ENCODE measurements at regions of chr16 and their contacts with region 1.

Region 1: GRCh38 chr16:87636072-87636684 is 33.9 kb downstream of the JPH3 start:
- DNase-seq: peak; percentile 63 to 90 (median 83)
- ATAC-seq: peak; percentile 85
- H3K4me3 ChIP-seq: peak overlapping the region; percentile 54 to 64
- H3K4me3 Mint-ChIP-seq: peak overlapping the region; percentile 87
- H3K27ac ChIP-seq: peak overlapping the region; percentile 47 to 49
- H3K27ac Mint-ChIP-seq: peak overlapping the region; percentile 93
- H3K4me1 ChIP-seq: peaks cover 17% of the 10 kb centered on the region
- H3K4me1 Mint-ChIP-seq: peaks cover 15% of the 10 kb centered on the region
- H3K27me3 ChIP-seq: peaks cover 0 to 2% of the 10 kb centered on the region in 2 experiments
- H3K27me3 Mint-ChIP-seq: no peaks in the 10 kb centered on the region
- CTCF ChIP-seq: peak; percentile 65

Region 2: GRCh38 chr16:87316923-87317749 is 319.0 kb before region 1 on chr16 and contains the start of gene C16orf95:
- CTCF ChIA-PET with region 1: interaction called, 28 read pairs
- POLR2A ChIA-PET with region 1: no interaction called
- intact Hi-C with region 1: loop called (anchors 1 to 2 kb)
- DNase-seq: peak; percentile 93 to 99 (median 97)
- ATAC-seq: peak; percentile 89
- H3K4me3 ChIP-seq: peak within 1 kb of the TSS; percentile 92 to 99
- H3K4me3 Mint-ChIP-seq: peak within 1 kb of the TSS; percentile 94
- H3K27ac ChIP-seq: peak within 1 kb of the TSS; percentile 76 to 81
- H3K27ac Mint-ChIP-seq: peak within 1 kb of the TSS; percentile 95
- H3K4me1 ChIP-seq: peaks cover 8% of the 10 kb centered on the region
- H3K4me1 Mint-ChIP-seq: peaks cover 14% of the 10 kb centered on the region
- H3K27me3 ChIP-seq: no peaks in the 10 kb centered on the region
- H3K27me3 Mint-ChIP-seq: no peaks in the 10 kb centered on the region
- CTCF ChIP-seq: peak; percentile 42
- total RNA-seq, gene C16orf95: 0.76 to 1.2 TPM

Region 3: GRCh38 chr16:87416826-87417527 is 219.2 kb before region 1 on chr16:
- CTCF ChIA-PET with region 1: interaction called, 39 read pairs
- POLR2A ChIA-PET with region 1: interaction called, 5 read pairs
- intact Hi-C with region 1: loop called in 1 of 2 experiments (anchors 1 kb)
- DNase-seq: peak in 5 of 9 experiments; percentile 35 to 54 (median 42)
- ATAC-seq: no peak
- H3K4me3 ChIP-seq: no peak overlapping the region
- H3K4me3 Mint-ChIP-seq: no peak overlapping the region
- H3K27ac ChIP-seq: no peak overlapping the region
- H3K27ac Mint-ChIP-seq: no peak overlapping the region
- H3K4me1 ChIP-seq: no peaks in the 10 kb centered on the region
- H3K4me1 Mint-ChIP-seq: no peaks in the 10 kb centered on the region
- H3K27me3 ChIP-seq: no peaks in the 10 kb centered on the region
- H3K27me3 Mint-ChIP-seq: no peaks in the 10 kb centered on the region
- CTCF ChIP-seq: peak; percentile 60

Region 4: DNA sequence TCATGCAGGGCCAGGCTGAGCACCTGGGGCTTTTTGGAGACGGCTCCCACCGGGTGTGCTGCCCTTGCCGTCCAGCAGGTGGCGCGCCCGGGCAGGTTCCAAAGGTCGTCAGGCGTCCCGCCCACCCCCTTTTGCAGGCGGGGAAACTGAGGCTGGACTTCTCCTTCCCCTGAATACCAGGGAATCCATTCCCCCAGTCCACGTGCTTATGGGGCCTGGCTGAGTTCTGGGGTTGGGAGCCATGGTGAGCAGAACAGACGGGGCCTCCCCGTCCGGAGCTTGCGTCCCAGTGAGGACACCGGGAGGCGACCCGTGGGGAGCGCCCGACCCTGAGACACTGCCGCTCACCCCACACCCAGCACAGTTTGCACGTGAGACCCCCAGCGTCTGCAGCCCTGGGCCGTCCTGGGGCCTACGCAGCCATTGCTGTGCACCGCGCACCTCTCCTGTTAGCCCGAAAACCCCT is 85.6 kb before region 1 on chr16:
- CTCF ChIA-PET with region 1: interaction called, 36 read pairs
- POLR2A ChIA-PET with region 1: no interaction called
- intact Hi-C with region 1: loop called in 1 of 2 experiments (anchors 1 kb)
- DNase-seq: peak; percentile 22 to 79 (median 60)
- ATAC-seq: peak; percentile 56
- H3K4me3 ChIP-seq: no peak overlapping the region
- H3K4me3 Mint-ChIP-seq: no peak overlapping the region
- H3K27ac ChIP-seq: no peak overlapping the region
- H3K27ac Mint-ChIP-seq: no peak overlapping the region
- H3K4me1 ChIP-seq: no peaks in the 10 kb centered on the region
- H3K4me1 Mint-ChIP-seq: peaks cover 5% of the 10 kb centered on the region
- H3K27me3 ChIP-seq: no peaks in the 10 kb centered on the region
- H3K27me3 Mint-ChIP-seq: peaks cover 23% of the 10 kb centered on the region
- CTCF ChIP-seq: peak; percentile 91

Region 5: GRCh38 chr16:87587636-87588035 is 48.5 kb before region 1 on chr16:
- CTCF ChIA-PET with region 1: interaction called, 54 read pairs
- POLR2A ChIA-PET with region 1: no interaction called
- intact Hi-C with region 1: loop called in 1 of 2 experiments (anchors 2 kb)
- DNase-seq: no peak
- ATAC-seq: no peak
- H3K4me3 ChIP-seq: no peak overlapping the region
- H3K4me3 Mint-ChIP-seq: no peak overlapping the region
- H3K27ac ChIP-seq: no peak overlapping the region
- H3K27ac Mint-ChIP-seq: no peak overlapping the region
- H3K4me1 ChIP-seq: no peaks in the 10 kb centered on the region
- H3K4me1 Mint-ChIP-seq: no peaks in the 10 kb centered on the region
- H3K27me3 ChIP-seq: peaks cover 0 to 3% of the 10 kb centered on the region in 2 experiments
- H3K27me3 Mint-ChIP-seq: peaks cover 43% of the 10 kb centered on the region
- CTCF ChIP-seq: no peak

Region 6: DNA sequence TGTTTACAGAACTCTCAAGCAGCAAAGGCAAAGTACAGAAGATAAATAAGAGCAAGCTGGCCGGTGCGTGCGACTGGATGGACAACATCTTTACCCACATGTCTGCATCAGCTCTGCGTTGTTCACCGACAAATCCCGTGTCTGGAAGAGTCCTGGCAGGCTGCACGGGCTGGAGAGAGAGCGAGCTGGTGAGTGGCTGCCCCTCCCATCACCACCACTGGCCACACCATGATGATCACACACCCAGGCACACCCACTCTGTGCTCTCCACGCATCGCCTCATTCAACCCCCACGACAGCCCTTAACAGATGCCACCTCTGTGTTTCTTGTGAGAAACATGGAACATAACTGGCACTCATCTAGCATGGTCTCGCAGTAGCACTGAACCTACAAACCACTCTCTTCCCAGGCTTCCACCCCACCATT is 1795.0 kb after region 1 on chr16:
- CTCF ChIA-PET with region 1: no interaction called
- POLR2A ChIA-PET with region 1: no interaction called
- intact Hi-C with region 1: no loop called
- DNase-seq: no peak
- ATAC-seq: no peak
- H3K4me3 ChIP-seq: no peak overlapping the region
- H3K4me3 Mint-ChIP-seq: no peak overlapping the region
- H3K27ac ChIP-seq: peak overlapping the region in 1 of 2 experiments; percentile 23
- H3K27ac Mint-ChIP-seq: no peak overlapping the region
- H3K4me1 ChIP-seq: peaks cover 71% of the 10 kb centered on the region
- H3K4me1 Mint-ChIP-seq: peaks cover 41% of the 10 kb centered on the region
- H3K27me3 ChIP-seq: no peaks in the 10 kb centered on the region
- H3K27me3 Mint-ChIP-seq: no peaks in the 10 kb centered on the region
- CTCF ChIP-seq: no peak